ENCODE measurements at regions of chr15 and their contacts with region 1.

Region 1: GRCh38 chr15:50134520-50135024 is 15.5 kb upstream of the ATP8B4 start:
- DNase-seq: no peak
- H3K4me3 Mint-ChIP-seq: peak overlapping the region; percentile 1
- H3K27ac Mint-ChIP-seq: peak overlapping the region; percentile 92
- H3K4me1 Mint-ChIP-seq: peaks cover 52% of the 10 kb centered on the region
- H3K27me3 Mint-ChIP-seq: peaks cover 4% of the 10 kb centered on the region

Region 2: GRCh38 chr15:48810414-48811317 is 1323.9 kb before region 1 on chr15 and contains the start of gene CEP152:
- CTCF ChIA-PET with region 1: no interaction called
- intact Hi-C with region 1: loop called (anchors 2 kb)
- DNase-seq: peak; percentile 99
- H3K4me3 Mint-ChIP-seq: peak within 1 kb of the TSS; percentile 97
- H3K27ac Mint-ChIP-seq: peak within 1 kb of the TSS; percentile 95
- H3K4me1 Mint-ChIP-seq: peaks cover 35% of the 10 kb centered on the region
- H3K27me3 Mint-ChIP-seq: no peaks in the 10 kb centered on the region
- total RNA-seq, gene CEP152: 55.1 to 62.0 TPM

Region 3: GRCh38 chr15:49620658-49621368 is 513.8 kb before region 1 on chr15 and contains the starts of genes DTWD1 and FAM227B:
- CTCF ChIA-PET with region 1: no interaction called
- intact Hi-C with region 1: loop called (anchors 2 kb)
- DNase-seq: peak; percentile 96
- H3K4me3 Mint-ChIP-seq: peak within 1 kb of the TSS; percentile 88
- H3K27ac Mint-ChIP-seq: peak within 1 kb of the TSS; percentile 91
- H3K4me1 Mint-ChIP-seq: peaks cover 33% of the 10 kb centered on the region
- H3K27me3 Mint-ChIP-seq: no peaks in the 10 kb centered on the region
- total RNA-seq, gene DTWD1: 18.5 to 19.4 TPM
- total RNA-seq, gene FAM227B: 2.0 to 2.8 TPM

Region 4: DNA sequence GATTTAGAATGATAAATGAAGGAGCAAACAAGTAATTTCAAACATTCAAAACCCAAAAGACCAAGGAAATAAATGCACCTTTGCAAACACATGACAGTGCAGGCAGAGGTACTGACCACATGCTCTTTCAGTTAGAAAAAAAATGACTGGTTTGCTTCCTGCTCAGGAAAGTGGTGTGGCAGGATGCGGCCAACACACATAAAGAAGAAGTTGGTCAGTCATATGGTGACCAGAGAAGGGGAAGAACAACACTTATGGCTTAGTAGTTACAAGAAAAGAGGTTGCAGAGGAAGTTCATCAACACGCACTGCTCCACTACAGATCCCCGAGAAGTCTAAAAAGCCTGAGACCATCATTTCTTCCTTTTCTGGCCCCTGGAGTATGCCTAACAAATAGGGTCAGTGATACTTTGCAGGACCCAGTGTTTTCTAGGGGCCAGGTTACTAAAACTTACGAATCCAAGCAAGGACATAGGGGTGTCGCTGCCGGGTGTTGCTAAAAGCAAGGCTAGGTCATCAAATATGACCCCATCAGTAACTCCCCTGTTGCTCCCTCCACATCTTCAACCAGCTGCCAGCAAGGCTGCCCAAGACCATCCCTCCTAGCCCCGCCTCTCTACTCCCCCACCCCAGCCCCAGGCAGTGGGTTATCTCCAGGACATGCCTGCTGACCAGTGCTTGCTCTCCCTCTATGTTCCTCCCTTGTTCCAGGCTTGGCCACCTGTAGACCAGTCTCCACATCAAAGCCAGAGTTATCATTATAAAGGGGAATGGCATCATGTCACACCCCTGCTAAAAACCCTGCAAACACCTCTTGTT is 26.8 kb before region 1 on chr15:
- CTCF ChIA-PET with region 1: interaction called, 4 read pairs
- intact Hi-C with region 1: loop called (anchors 2 kb)
- DNase-seq: peak; percentile 26
- H3K4me3 Mint-ChIP-seq: no peak overlapping the region
- H3K27ac Mint-ChIP-seq: no peak overlapping the region
- H3K4me1 Mint-ChIP-seq: peaks cover 33% of the 10 kb centered on the region
- H3K27me3 Mint-ChIP-seq: peaks cover 4% of the 10 kb centered on the region

Region 5: DNA sequence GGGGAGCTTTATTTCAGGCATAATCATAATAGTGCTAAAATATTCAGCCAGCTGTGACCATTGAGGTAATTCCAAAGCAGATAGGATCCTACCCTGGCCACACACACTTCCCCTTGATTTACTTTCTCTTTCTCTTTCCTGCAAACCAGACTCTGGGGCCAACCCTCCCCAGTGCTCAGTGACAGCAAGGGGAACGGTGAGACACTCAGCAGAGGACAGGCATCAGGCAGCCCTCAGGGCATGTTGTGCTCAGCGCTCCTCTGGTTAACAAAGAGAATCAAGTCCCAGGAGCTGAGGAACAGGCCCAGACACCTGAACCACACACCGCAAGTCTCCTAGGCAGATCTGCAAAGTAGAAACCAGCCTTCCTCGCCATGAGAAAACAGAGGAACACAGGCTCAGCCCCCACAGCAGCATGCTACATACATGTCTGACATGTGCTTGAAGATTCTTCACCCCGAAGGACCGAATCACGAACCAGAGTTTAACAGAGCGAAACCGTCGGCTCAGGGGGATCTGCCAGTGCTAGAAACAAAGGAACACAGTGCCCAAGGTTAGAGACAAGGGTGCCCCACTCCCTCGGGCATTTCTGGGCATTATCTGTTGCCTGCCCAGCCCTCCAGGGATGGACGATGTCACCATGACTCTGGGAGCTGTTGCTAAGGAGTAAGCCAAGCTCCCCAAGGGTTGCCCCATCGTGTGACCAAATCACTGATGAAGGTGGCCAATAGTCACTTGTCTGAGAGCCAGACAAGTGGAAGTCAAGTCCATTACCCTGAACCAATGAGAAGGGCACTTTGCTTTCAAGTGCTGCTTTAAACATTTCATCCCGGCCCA is 113.5 kb after region 1 on chr15:
- CTCF ChIA-PET with region 1: no interaction called
- intact Hi-C with region 1: loop called (anchors 1 kb)
- DNase-seq: peak; percentile 88
- H3K4me3 Mint-ChIP-seq: peak overlapping the region; percentile 81
- H3K27ac Mint-ChIP-seq: peak overlapping the region; percentile 99
- H3K4me1 Mint-ChIP-seq: peaks cover 42% of the 10 kb centered on the region
- H3K27me3 Mint-ChIP-seq: no peaks in the 10 kb centered on the region

Region 6: GRCh38 chr15:50765195-50765973 is 630.8 kb after region 1 on chr15 and contains the start of gene SPPL2A:
- CTCF ChIA-PET with region 1: no interaction called
- intact Hi-C with region 1: loop called (anchors 1 kb)
- DNase-seq: peak; percentile 93
- H3K4me3 Mint-ChIP-seq: peak within 1 kb of the TSS; percentile 90
- H3K27ac Mint-ChIP-seq: peak within 1 kb of the TSS; percentile 99
- H3K4me1 Mint-ChIP-seq: peaks cover 55% of the 10 kb centered on the region
- H3K27me3 Mint-ChIP-seq: no peaks in the 10 kb centered on the region
- total RNA-seq, gene SPPL2A: 37.7 to 41.6 TPM

Measured in activated naive CD4-positive, alpha-beta T cell treated with anti-CD3 and anti-CD28 coated beads for 36 hours (primary cell).